T-cell (primary cell): ENCODE measurements at regions of chr2 and their contacts with region 1.

Region 1: GRCh38 chr2:227862227-227862740 is 9.1 kb upstream of the DAW1 start:
- DNase-seq: peak in 4 of 35 experiments; percentile 6 to 64 (median 14)
- ATAC-seq: no peak
- H3K4me3 ChIP-seq: no peak overlapping the region
- H3K4me3 Mint-ChIP-seq: no peak overlapping the region
- H3K27ac ChIP-seq: no peak overlapping the region
- H3K27ac Mint-ChIP-seq: no peak overlapping the region
- H3K4me1 ChIP-seq: no peaks in the 10 kb centered on the region
- H3K4me1 Mint-ChIP-seq: no peaks in the 10 kb centered on the region
- H3K27me3 ChIP-seq: peaks cover 0 to 2% of the 10 kb centered on the region in 2 experiments
- H3K27me3 Mint-ChIP-seq: peaks cover 0 to 7% of the 10 kb centered on the region in 2 donors

Region 2: GRCh38 chr2:227657199-227657845 is 205.0 kb before region 1 on chr2:
- CTCF ChIA-PET with region 1: interaction called in 1 of 2 experiments, 10 read pairs
- POLR2A ChIA-PET with region 1: no interaction called
- DNase-seq: no peak
- ATAC-seq: no peak
- H3K4me3 ChIP-seq: no peak overlapping the region
- H3K4me3 Mint-ChIP-seq: no peak overlapping the region
- H3K27ac ChIP-seq: no peak overlapping the region
- H3K27ac Mint-ChIP-seq: no peak overlapping the region
- H3K4me1 ChIP-seq: no peaks in the 10 kb centered on the region
- H3K4me1 Mint-ChIP-seq: no peaks in the 10 kb centered on the region
- H3K27me3 ChIP-seq: no peaks in the 10 kb centered on the region
- H3K27me3 Mint-ChIP-seq: peaks cover 2 to 3% of the 10 kb centered on the region in 2 donors

Region 3: DNA sequence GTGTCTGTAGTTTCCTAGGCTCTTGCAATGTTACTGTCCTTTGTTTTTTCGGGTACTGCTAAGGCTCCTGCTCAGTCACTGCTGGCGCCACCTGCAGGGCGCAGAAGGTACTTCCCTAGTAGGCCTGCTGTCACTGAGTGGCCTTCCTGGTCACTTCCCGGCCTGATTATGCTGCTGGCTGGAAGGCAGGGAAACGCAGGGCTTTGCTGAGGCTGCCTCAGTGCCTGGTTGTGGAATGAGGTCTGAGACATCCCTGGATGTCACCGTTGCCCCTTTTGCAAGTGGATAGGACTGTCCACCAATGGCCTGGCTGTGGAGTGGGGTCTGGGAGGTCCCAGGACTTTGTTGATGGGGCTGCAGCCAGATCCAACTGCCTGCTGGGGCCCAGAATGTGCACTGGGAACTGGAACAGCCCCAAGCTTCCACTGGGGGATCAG is 22.2 kb after region 1 on chr2:
- CTCF ChIA-PET with region 1: interaction called in 1 of 2 experiments, 11 read pairs
- POLR2A ChIA-PET with region 1: no interaction called
- DNase-seq: peak in 28 of 35 experiments; percentile 3 to 67 (median 22)
- ATAC-seq: peak in 1 of 4 experiments; percentile 44
- H3K4me3 ChIP-seq: no peak overlapping the region
- H3K4me3 Mint-ChIP-seq: no peak overlapping the region
- H3K27ac ChIP-seq: no peak overlapping the region
- H3K27ac Mint-ChIP-seq: no peak overlapping the region
- H3K4me1 ChIP-seq: no peaks in the 10 kb centered on the region
- H3K4me1 Mint-ChIP-seq: peaks cover 0 to 4% (median 0%) of the 10 kb centered on the region in 3 donors
- H3K27me3 ChIP-seq: peaks cover 0 to 4% of the 10 kb centered on the region in 2 experiments
- H3K27me3 Mint-ChIP-seq: peaks cover 0 to 7% of the 10 kb centered on the region in 2 donors